MCF 10A (cell line): ENCODE measurements at regions of chr6 and their contacts with region 1.

Region 1: DNA sequence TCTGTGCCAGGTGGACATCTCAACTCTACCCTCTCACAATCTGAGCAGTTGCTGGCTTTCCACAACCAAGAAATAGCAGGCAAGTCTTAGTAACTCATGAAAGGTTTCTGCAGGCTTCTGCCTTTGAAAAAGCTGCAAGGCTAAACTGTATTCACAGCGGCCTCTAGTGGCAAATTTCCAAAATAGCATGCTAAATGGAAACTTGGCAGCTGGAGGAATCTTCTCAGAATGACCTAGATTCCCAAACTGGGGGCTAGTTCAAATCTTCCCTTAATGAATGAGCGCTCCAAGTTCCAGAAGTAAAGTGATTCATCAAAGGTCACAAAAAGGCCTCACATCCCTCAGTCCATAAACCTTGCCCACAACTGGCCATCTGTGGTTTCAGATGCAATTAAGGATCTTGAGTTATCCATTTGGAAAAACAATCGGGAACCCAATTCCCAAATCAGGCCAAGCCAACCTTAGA is 11.9 kb upstream of the CPNE5 start:
- DNase-seq: peak; percentile 74
- H3K4me3 Mint-ChIP-seq: no peak overlapping the region
- H3K27ac Mint-ChIP-seq: no peak overlapping the region
- H3K4me1 Mint-ChIP-seq: peaks cover 17% of the 10 kb centered on the region
- H3K27me3 Mint-ChIP-seq: no peaks in the 10 kb centered on the region
- CTCF ChIP-seq: peak; percentile 83

Region 2: DNA sequence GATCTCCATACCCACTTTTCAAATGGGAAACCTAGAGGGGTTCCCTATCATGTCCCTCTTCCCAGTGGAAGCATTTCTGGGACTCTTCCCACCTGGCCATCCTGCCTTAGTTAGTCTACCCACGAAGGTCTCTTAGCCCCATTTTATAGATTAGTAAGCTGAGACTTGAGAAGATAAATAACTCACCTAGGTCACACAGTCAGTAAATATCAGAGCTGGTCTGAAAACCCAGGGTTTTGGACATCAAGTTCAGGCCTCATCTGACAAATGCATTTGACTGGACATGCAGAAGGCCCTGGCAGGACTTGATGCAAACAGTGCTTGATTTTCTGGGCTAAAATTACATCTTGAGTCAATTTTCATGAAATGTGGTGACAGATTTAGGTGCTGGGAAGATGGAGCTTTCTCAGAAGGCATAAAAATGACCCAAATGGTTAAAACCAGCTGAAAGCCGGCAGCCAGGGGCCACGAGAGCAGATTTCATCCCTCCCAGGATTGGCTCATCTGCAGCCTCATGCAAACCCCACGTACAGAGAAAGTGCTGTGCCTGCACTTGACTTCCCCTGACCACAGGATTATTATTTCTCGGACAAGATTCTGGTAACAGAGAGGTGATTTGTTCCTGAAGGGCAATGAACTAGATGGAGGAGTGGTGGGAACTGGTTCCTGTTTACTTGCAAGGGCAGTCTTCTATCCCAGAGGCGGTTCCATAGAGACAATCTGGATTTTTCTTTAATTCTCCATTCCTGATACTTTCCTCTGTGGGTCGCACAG is 35.0 kb before region 1 on chr6:
- CTCF ChIA-PET with region 1: interaction called, 5 read pairs
- POLR2A ChIA-PET with region 1: no interaction called
- intact Hi-C with region 1: loop called (anchors 1 kb)
- DNase-seq: no peak
- H3K4me3 Mint-ChIP-seq: no peak overlapping the region
- H3K27ac Mint-ChIP-seq: no peak overlapping the region
- H3K4me1 Mint-ChIP-seq: peaks cover 7% of the 10 kb centered on the region
- H3K27me3 Mint-ChIP-seq: no peaks in the 10 kb centered on the region
- CTCF ChIP-seq: no peak

Region 3: GRCh38 chr6:36834576-36835341 is 16.4 kb before region 1 on chr6:
- CTCF ChIA-PET with region 1: interaction called, 10 read pairs
- POLR2A ChIA-PET with region 1: interaction called, 3 read pairs
- intact Hi-C with region 1: no loop called
- DNase-seq: no peak
- H3K4me3 Mint-ChIP-seq: no peak overlapping the region
- H3K27ac Mint-ChIP-seq: no peak overlapping the region
- H3K4me1 Mint-ChIP-seq: peaks cover 11% of the 10 kb centered on the region
- H3K27me3 Mint-ChIP-seq: peaks cover 15% of the 10 kb centered on the region
- CTCF ChIP-seq: no peak

Region 4: GRCh38 chr6:36862164-36862847 is 11.1 kb after region 1 on chr6:
- CTCF ChIA-PET with region 1: interaction called, 11 read pairs
- POLR2A ChIA-PET with region 1: interaction called, 6 read pairs
- intact Hi-C with region 1: no loop called
- DNase-seq: peak; percentile 61
- H3K4me3 Mint-ChIP-seq: no peak overlapping the region
- H3K27ac Mint-ChIP-seq: no peak overlapping the region
- H3K4me1 Mint-ChIP-seq: peaks cover 28% of the 10 kb centered on the region
- H3K27me3 Mint-ChIP-seq: no peaks in the 10 kb centered on the region
- CTCF ChIP-seq: no peak

Region 5: GRCh38 chr6:36920546-36920945 is 69.4 kb after region 1 on chr6:
- CTCF ChIA-PET with region 1: no interaction called
- POLR2A ChIA-PET with region 1: no interaction called
- intact Hi-C with region 1: no loop called
- DNase-seq: no peak
- H3K4me3 Mint-ChIP-seq: no peak overlapping the region
- H3K27ac Mint-ChIP-seq: no peak overlapping the region
- H3K4me1 Mint-ChIP-seq: no peaks in the 10 kb centered on the region
- H3K27me3 Mint-ChIP-seq: no peaks in the 10 kb centered on the region
- CTCF ChIP-seq: no peak